PC-3 (cell line): ENCODE measurements at regions of chr2 and their contacts with region 1.

Region 1: GRCh38 chr2:65366595-65367125 is 65.7 kb downstream of the SPRED2 start:
- DNase-seq: peak; percentile 99
- ATAC-seq: peak; percentile 77
- H3K4me3 ChIP-seq: peak overlapping the region; percentile 66
- H3K27ac ChIP-seq: peak overlapping the region; percentile 98
- H3K4me1 ChIP-seq: peaks cover 64% of the 10 kb centered on the region
- H3K27me3 ChIP-seq: no peaks in the 10 kb centered on the region
- CTCF ChIP-seq: no peak

Region 2: DNA sequence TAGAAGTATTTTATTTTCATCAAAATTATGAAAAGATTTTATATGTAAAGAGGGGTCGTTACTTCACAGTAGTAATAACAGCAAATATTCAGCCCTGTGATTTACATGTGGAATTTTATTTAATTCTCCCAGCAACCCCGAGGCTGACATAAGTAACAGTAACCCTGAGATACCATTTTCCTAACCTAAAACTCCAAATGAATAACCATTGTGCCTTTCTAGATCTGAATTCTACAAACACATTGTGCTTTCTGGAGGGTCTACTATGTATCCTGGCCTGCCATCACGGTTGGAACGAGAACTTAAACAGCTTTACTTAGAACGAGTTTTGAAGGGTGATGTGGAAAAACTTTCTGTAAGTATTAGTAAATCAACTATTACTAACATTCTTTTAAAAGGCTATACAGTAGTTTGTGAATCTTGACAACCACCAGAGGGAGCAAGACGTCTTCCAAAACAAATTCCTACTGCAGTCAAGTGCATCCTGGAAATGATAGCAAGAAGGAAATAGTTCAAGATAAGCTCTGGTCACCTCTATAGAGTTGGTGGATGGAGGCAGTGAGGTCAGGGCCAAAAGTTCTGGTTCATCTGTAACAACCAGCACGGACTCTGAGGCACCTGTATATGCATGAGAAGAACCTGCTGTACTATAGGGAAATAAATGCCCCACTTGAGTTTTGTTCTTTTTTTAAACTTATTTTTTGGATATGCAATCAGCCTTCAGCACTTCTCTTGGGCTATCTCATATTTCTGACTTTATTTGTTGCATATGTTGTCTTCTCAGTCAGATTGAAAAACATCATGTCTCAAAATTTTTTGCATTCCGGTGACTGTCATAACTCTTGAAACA is 101.6 kb before region 1 on chr2:
- CTCF ChIA-PET with region 1: interaction called, 3 read pairs
- POLR2A ChIA-PET with region 1: interaction called, 3 read pairs
- intact Hi-C with region 1: loop called (anchors 1 kb)
- DNase-seq: peak; percentile 74
- ATAC-seq: peak; percentile 70
- H3K4me3 ChIP-seq: no peak overlapping the region
- H3K27ac ChIP-seq: no peak overlapping the region
- H3K4me1 ChIP-seq: peaks cover 19% of the 10 kb centered on the region; the same call in 1 of the 2 replicates
- H3K27me3 ChIP-seq: no peaks in the 10 kb centered on the region
- CTCF ChIP-seq: peak; percentile 88

Region 3: GRCh38 chr2:65300761-65301711 is 65.6 kb before region 1 on chr2:
- CTCF ChIA-PET with region 1: no interaction called
- POLR2A ChIA-PET with region 1: no interaction called
- intact Hi-C with region 1: loop called (anchors 10 kb)
- DNase-seq: peak; percentile 80
- ATAC-seq: peak; percentile 78
- H3K4me3 ChIP-seq: peak overlapping the region; percentile 46; the same call in 1 of the 2 replicates
- H3K27ac ChIP-seq: peak overlapping the region; percentile 92
- H3K4me1 ChIP-seq: peaks cover 39% of the 10 kb centered on the region
- H3K27me3 ChIP-seq: no peaks in the 10 kb centered on the region
- CTCF ChIP-seq: no peak

Region 4: GRCh38 chr2:65320042-65320725 is 46.5 kb before region 1 on chr2:
- CTCF ChIA-PET with region 1: interaction called, 5 read pairs
- POLR2A ChIA-PET with region 1: interaction called, 3 read pairs
- intact Hi-C with region 1: loop called (anchors 1 kb)
- DNase-seq: peak; percentile 97
- ATAC-seq: peak; percentile 76
- H3K4me3 ChIP-seq: peak overlapping the region; percentile 33; the same call in 1 of the 2 replicates
- H3K27ac ChIP-seq: peak overlapping the region; percentile 93
- H3K4me1 ChIP-seq: peaks cover 75% of the 10 kb centered on the region
- H3K27me3 ChIP-seq: no peaks in the 10 kb centered on the region
- CTCF ChIP-seq: peak; percentile 74

Region 5: GRCh38 chr2:65377556-65378192 is 11.0 kb after region 1 on chr2:
- CTCF ChIA-PET with region 1: interaction called, 4 read pairs
- POLR2A ChIA-PET with region 1: interaction called, 9 read pairs
- intact Hi-C with region 1: loop called (anchors 1 kb)
- DNase-seq: peak; percentile 90
- ATAC-seq: peak; percentile 65
- H3K4me3 ChIP-seq: 0 out of 2 replicates have a peak overlapping the region, but pooled peaks have one; percentile 0
- H3K27ac ChIP-seq: peak overlapping the region; percentile 76
- H3K4me1 ChIP-seq: peaks cover 85% of the 10 kb centered on the region
- H3K27me3 ChIP-seq: no peaks in the 10 kb centered on the region
- CTCF ChIP-seq: no peak

Region 6: GRCh38 chr2:65554765-65555591 is 188.3 kb after region 1 on chr2:
- CTCF ChIA-PET with region 1: no interaction called
- POLR2A ChIA-PET with region 1: no interaction called
- intact Hi-C with region 1: loop called (anchors 1 kb)
- DNase-seq: peak; percentile 39
- ATAC-seq: peak; percentile 45
- H3K4me3 ChIP-seq: no peak overlapping the region
- H3K27ac ChIP-seq: no peak overlapping the region
- H3K4me1 ChIP-seq: peaks cover 5% of the 10 kb centered on the region
- H3K27me3 ChIP-seq: no peaks in the 10 kb centered on the region
- CTCF ChIP-seq: no peak